Transverse colon (tissue), 4 donors: ENCODE measurements at regions of chr1 and their contacts with region 1.

Region 1: GRCh38 chr1:246488674-246489073 is 18.4 kb downstream of the SMYD3 start:
- DNase-seq: no peak
- H3K4me3 ChIP-seq: no peak overlapping the region
- H3K27ac ChIP-seq: no peak overlapping the region
- H3K4me1 ChIP-seq: peaks cover 0 to 7% (median 0%) of the 10 kb centered on the region in 4 donors
- H3K27me3 ChIP-seq: no peaks in the 10 kb centered on the region
- CTCF ChIP-seq: no peak
- EP300 ChIP-seq: no peak
- POLR2A ChIP-seq: no peak

Region 2: GRCh38 chr1:246043367-246043955 is 445.2 kb before region 1 on chr1:
- in situ Hi-C with region 1: no loop called
- intact Hi-C with region 1: loop called (anchors 5 kb)
- DNase-seq: no peak
- H3K4me3 ChIP-seq: no peak overlapping the region
- H3K27ac ChIP-seq: no peak overlapping the region
- H3K4me1 ChIP-seq: no peaks in the 10 kb centered on the region
- H3K27me3 ChIP-seq: no peaks in the 10 kb centered on the region
- CTCF ChIP-seq: no peak
- EP300 ChIP-seq: no peak
- POLR2A ChIP-seq: no peak

Region 3: GRCh38 chr1:246364415-246364941 is 124.2 kb before region 1 on chr1:
- in situ Hi-C with region 1: no loop called
- intact Hi-C with region 1: no loop called
- DNase-seq: no peak
- H3K4me3 ChIP-seq: no peak overlapping the region
- H3K27ac ChIP-seq: no peak overlapping the region
- H3K4me1 ChIP-seq: no peaks in the 10 kb centered on the region
- H3K27me3 ChIP-seq: no peaks in the 10 kb centered on the region
- CTCF ChIP-seq: no peak
- EP300 ChIP-seq: no peak
- POLR2A ChIP-seq: no peak